Activated CD8-positive, alpha-beta T cell treated with anti-CD3 and anti-CD28 coated beads for 36 hours (primary cell): ENCODE measurements at regions of chr19 and their contacts with region 1.

Region 1: GRCh38 chr19:16584248-16585141 is 12.3 kb upstream of the SLC35E1 start:
- DNase-seq: peak; percentile 96
- ATAC-seq: peak; percentile 79
- H3K4me3 Mint-ChIP-seq: peak overlapping the region; percentile 87
- H3K27ac Mint-ChIP-seq: peak overlapping the region; percentile 74
- H3K4me1 Mint-ChIP-seq: peaks cover 85% of the 10 kb centered on the region
- H3K27me3 Mint-ChIP-seq: no peaks in the 10 kb centered on the region
- CTCF ChIP-seq: no peak

Region 2: DNA sequence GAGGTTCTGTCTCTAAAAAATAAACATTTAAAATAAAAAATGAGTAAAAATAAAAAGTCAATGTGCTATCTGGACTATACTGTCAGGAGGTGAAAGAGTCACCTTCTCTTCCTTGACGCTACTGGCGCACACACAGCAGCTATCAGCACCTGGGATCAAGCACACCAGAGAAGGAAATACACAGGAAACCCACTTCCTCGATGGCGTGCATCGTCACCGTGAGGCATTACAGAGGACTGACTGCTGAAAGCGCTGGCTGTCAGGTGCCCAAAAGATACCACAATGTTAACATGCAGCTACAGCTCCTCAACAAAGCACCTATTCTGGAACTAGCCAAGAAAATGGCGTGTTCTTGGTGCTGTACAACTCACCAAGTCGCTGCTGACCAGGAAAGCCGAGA is 18.3 kb before region 1 on chr19:
- CTCF ChIA-PET with region 1: interaction called, 11 read pairs
- POLR2A ChIA-PET with region 1: interaction called, 84 read pairs
- intact Hi-C with region 1: no loop called
- DNase-seq: peak; percentile 85
- ATAC-seq: peak; percentile 95
- H3K4me3 Mint-ChIP-seq: peak overlapping the region; percentile 18
- H3K27ac Mint-ChIP-seq: peak overlapping the region; percentile 93
- H3K4me1 Mint-ChIP-seq: peaks cover 32% of the 10 kb centered on the region
- H3K27me3 Mint-ChIP-seq: no peaks in the 10 kb centered on the region
- CTCF ChIP-seq: no peak

Region 3: GRCh38 chr19:16572332-16573211 is 11.9 kb before region 1 on chr19 and contains the start of gene SLC35E1:
- CTCF ChIA-PET with region 1: interaction called, 14 read pairs
- POLR2A ChIA-PET with region 1: interaction called, 84 read pairs
- intact Hi-C with region 1: no loop called
- DNase-seq: peak; percentile 94
- ATAC-seq: peak; percentile 93
- H3K4me3 Mint-ChIP-seq: peak within 1 kb of the TSS; percentile 100
- H3K27ac Mint-ChIP-seq: peak within 1 kb of the TSS; percentile 99
- H3K4me1 Mint-ChIP-seq: peaks cover 54% of the 10 kb centered on the region
- H3K27me3 Mint-ChIP-seq: no peaks in the 10 kb centered on the region
- CTCF ChIP-seq: no peak
- total RNA-seq, gene SLC35E1: 60.1 to 62.4 TPM

Region 4: GRCh38 chr19:16678498-16678897 is 94.0 kb after region 1 on chr19:
- CTCF ChIA-PET with region 1: no interaction called
- POLR2A ChIA-PET with region 1: no interaction called
- intact Hi-C with region 1: no loop called
- DNase-seq: no peak
- ATAC-seq: no peak
- H3K4me3 Mint-ChIP-seq: no peak overlapping the region
- H3K27ac Mint-ChIP-seq: no peak overlapping the region
- H3K4me1 Mint-ChIP-seq: no peaks in the 10 kb centered on the region
- H3K27me3 Mint-ChIP-seq: no peaks in the 10 kb centered on the region
- CTCF ChIP-seq: no peak